ENCODE measurements at regions of chr22 and their contacts with region 1.

Region 1: GRCh38 chr22:50271519-50271970 is 1.4 kb upstream of the MAPK11 start:
- DNase-seq: peak; percentile 90
- H3K4me3 Mint-ChIP-seq: no peak overlapping the region
- H3K27ac Mint-ChIP-seq: no peak overlapping the region
- H3K4me1 Mint-ChIP-seq: peaks cover 13% of the 10 kb centered on the region
- H3K27me3 Mint-ChIP-seq: peaks cover 6% of the 10 kb centered on the region

Region 2: DNA sequence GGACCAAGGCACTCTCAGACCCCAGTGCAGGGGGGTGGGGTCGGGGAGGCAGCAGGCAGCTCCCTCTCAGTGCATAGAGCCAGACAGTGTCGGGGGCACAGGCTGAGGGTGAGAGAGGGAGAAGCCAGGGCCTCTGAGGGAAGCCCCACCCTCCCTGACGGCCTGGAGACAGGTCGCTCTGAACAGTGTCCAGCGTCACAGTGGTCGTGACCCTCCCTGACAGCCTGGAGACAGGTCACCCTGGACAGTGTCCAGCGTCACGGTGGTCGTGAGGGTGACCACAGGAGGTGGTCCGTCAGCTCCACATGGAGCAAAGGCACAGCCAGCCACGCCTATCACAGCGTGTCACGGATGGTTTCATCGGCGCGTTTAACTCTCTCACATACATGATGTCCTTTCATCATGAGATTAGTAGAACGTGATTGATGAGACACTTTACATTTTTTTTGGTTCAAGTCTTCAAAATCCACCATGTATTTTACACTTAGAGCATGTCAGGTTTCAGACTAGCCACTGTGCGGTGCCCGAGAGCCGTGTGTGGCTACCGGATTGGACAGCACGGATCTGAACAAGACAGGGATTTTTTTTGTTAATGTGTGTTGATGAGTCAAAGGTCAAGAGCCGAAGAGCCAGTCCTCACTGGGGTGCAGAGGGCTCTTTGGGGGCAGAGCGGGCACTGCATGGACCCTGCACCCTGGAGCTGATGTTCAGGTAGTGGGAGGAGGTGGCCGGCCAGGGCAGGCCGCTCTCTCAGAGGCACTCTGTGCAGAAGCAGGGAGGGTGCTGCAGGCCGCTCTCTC is 124.9 kb before region 1 on chr22:
- intact Hi-C with region 1: no loop called
- DNase-seq: no peak
- H3K4me3 Mint-ChIP-seq: no peak overlapping the region
- H3K27ac Mint-ChIP-seq: no peak overlapping the region
- H3K4me1 Mint-ChIP-seq: peaks cover 2% of the 10 kb centered on the region
- H3K27me3 Mint-ChIP-seq: peaks cover 13% of the 10 kb centered on the region

Region 3: DNA sequence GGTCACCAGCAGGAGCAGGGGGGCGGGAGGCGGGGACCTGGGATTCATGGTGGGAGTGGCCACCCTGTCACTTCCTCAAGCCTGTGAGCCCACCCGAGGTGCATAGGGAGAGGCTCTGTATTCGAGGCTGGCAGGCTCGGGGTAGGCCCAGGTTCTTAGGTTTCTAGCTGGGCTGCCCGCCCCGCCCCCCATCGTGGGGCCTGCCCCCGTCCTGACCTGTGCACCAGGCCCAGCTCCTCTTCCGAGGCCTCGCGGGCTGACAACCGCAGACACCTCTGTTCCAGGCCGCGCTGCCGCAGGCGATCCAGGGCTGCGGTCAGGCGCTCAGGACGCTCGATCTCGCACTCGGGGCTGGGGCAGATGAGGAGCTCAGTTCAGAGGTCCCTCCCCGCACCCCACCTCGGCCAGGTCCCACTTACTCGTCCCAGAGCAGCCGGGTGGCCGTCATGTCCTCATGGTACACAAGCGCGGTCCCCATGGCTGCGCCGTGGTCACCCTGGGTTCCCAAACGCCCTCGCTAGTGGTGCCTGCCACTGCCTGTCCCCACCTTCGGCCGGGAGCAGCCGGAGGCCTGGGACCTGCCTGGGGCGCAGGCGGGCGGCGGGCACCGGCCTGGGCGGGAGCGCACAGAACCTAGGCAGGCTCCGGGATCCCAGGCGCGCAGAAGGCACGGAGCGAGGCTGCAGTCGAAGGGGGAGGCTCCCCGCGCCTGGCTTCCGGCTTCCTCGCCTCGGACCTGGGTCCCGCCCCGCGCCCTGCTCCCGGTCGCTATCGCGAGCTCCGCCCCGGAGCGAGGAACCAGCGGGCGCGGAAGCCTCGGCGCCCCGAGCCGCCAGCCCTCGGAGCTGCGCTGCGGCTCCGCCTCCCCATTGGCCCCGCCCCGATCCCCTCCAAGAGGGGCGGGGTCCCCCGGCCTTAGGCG is 20.7 kb before region 1 on chr22 and contains the start of gene HDAC10:
- intact Hi-C with region 1: loop called (anchors 2 kb)
- DNase-seq: peak; percentile 96
- H3K4me3 Mint-ChIP-seq: peak within 1 kb of the TSS; percentile 84
- H3K27ac Mint-ChIP-seq: peak within 1 kb of the TSS; percentile 80
- H3K4me1 Mint-ChIP-seq: peaks cover 3% of the 10 kb centered on the region
- H3K27me3 Mint-ChIP-seq: no peaks in the 10 kb centered on the region
- total RNA-seq, gene HDAC10: 62.2 and 64.6 TPM in 2 replicates

Region 4: DNA sequence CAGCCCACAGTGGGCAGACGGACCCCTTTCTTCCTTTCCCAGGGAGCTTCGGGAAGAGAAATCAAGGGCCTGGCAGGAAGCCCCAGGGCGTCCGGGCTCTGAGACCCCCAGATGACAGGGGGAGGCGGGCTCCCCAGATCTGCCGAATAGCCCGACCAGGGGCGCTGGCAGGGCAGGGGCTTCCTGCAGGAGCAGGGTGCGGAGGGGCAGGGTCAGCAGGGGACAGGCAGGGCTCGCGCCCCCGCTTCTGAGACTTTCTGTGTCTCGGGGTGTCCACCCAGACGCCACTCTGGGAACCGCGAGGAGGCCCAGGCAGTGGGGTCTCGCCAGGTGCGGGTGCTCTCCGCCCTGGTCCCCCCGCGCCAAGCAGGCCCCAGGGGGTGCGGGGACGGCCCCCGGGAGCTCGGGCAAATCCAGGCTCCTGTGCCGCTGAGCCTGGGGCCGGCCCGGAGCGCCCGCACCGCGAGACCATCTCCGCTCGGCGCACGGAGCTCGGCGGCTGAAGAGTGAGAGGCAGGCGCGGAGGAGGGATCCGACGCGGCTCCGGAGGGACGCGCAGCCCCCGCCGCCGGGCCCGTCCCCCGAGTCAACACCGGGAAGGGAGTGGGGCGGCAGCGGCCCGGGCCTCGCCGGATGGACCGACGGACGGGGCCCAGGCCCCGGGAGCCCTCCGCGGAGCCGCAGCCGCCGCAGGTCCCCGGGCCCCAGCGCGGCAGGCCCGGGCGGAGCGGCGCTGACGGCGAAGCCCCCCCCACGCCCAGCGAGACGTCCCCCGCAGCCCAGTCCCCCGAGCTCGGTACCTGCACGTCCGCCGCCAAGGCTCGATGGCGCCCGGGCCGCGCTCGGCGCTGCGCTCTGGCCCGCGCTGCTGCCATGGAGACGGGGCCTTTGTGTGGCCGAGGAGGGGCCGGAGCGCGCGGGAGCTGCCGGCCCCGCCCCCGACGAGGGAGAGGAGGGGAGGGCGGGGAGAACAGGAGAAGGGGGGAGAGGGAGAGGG is 35.5 kb after region 1 on chr22 and contains the start of gene PLXNB2:
- intact Hi-C with region 1: loop called (anchors 5 kb)
- DNase-seq: peak; percentile 77
- H3K4me3 Mint-ChIP-seq: peak within 1 kb of the TSS; percentile 69
- H3K27ac Mint-ChIP-seq: no peak within 1 kb of the TSS
- H3K4me1 Mint-ChIP-seq: peaks cover 10% of the 10 kb centered on the region
- H3K27me3 Mint-ChIP-seq: peaks cover 10% of the 10 kb centered on the region
- total RNA-seq, gene PLXNB2: 9.0 and 9.5 TPM in 2 replicates

Measured in activated CD4-positive, alpha-beta T cell treated with anti-CD3 and anti-CD28 coated beads, Interleukin-2, amount 10 ng/mL, durations not matched to agents 24 days and 14 days (primary cell).